Colonic mucosa (tissue), 4 donors: ENCODE measurements at regions of chr15 and their contacts with region 1.

Region 1: GRCh38 chr15:40941528-40942336 is 11.5 kb upstream of the CHAC1 start:
- DNase-seq: peak; percentile 81
- H3K4me3 ChIP-seq: peak overlapping the region; percentile 53
- H3K27ac ChIP-seq: peak overlapping the region; percentile 77
- H3K4me1 ChIP-seq: no peaks in the 10 kb centered on the region
- H3K27me3 ChIP-seq: no peaks in the 10 kb centered on the region
- CTCF ChIP-seq: no peak

Region 2: GRCh38 chr15:40807028-40807887 is 134.5 kb before region 1 on chr15 and contains the starts of genes DNAJC17 and ZFYVE19:
- intact Hi-C with region 1: no loop called
- DNase-seq: peak; percentile 98
- H3K4me3 ChIP-seq: peak within 1 kb of the TSS; percentile 97
- H3K27ac ChIP-seq: peak within 1 kb of the TSS; percentile 96
- H3K4me1 ChIP-seq: peaks cover 7% of the 10 kb centered on the region
- H3K27me3 ChIP-seq: no peaks in the 10 kb centered on the region
- CTCF ChIP-seq: no peak
- total RNA-seq, gene DNAJC17: 38.1 to 48.0 TPM
- total RNA-seq, gene ZFYVE19: 22.9 to 27.9 TPM

Region 3: DNA sequence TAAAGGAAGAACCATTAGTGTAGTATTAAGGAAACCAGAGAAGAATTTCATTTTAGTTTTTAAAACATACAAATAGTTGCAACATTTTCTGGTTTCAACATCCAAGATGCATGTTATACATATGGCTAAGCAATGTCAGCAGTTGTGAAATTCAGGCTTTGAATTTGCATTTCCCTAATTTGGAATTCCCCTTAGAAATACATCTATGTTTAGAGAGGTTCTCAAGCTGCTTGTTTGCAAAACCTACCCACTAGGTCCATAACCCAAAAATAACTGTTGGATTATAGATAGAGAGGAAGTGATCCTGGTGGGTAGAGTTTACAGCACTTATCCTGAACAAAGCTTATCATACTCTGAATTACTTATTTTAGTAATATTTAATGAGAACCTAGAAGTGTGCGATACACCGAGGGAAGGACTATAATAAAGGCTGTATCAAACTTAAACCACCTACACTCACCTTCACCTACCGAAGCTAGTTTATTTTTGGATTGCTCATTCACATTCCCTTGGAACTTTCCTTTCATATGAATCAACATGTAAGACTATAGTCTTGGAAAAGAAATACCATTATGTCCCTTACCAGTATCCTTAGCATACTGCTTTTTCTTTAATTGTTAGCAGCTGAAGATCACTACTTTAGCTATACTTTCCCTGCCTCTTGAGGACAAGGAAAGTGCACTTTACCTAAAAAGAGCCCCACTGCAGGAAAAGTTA is 72.1 kb after region 1 on chr15:
- intact Hi-C with region 1: loop called (anchors 5 kb)
- DNase-seq: no peak
- H3K4me3 ChIP-seq: no peak overlapping the region
- H3K27ac ChIP-seq: no peak overlapping the region
- H3K4me1 ChIP-seq: no peaks in the 10 kb centered on the region
- H3K27me3 ChIP-seq: no peaks in the 10 kb centered on the region
- CTCF ChIP-seq: no peak